PC-3 (cell line): ENCODE measurements at regions of chr12 and their contacts with region 1.

Region 1: GRCh38 chr12:87953256-87953860 is 75.8 kb downstream of the C12orf50 start:
- DNase-seq: peak; percentile 53
- ATAC-seq: peak; percentile 66; the same call in 1 of the 2 replicates
- H3K4me3 ChIP-seq: no peak overlapping the region
- H3K27ac ChIP-seq: no peak overlapping the region
- H3K4me1 ChIP-seq: no peaks in the 10 kb centered on the region
- H3K27me3 ChIP-seq: no peaks in the 10 kb centered on the region
- CTCF ChIP-seq: peak; percentile 81

Region 2: GRCh38 chr12:85951823-85952222 is 2001.5 kb before region 1 on chr12:
- CTCF ChIA-PET with region 1: no interaction called
- POLR2A ChIA-PET with region 1: no interaction called
- intact Hi-C with region 1: loop called (anchors 5 kb)
- DNase-seq: peak; percentile 49
- ATAC-seq: no peak
- H3K4me3 ChIP-seq: no peak overlapping the region
- H3K27ac ChIP-seq: no peak overlapping the region
- H3K4me1 ChIP-seq: no peaks in the 10 kb centered on the region
- H3K27me3 ChIP-seq: no peaks in the 10 kb centered on the region
- CTCF ChIP-seq: peak; percentile 69

Region 3: DNA sequence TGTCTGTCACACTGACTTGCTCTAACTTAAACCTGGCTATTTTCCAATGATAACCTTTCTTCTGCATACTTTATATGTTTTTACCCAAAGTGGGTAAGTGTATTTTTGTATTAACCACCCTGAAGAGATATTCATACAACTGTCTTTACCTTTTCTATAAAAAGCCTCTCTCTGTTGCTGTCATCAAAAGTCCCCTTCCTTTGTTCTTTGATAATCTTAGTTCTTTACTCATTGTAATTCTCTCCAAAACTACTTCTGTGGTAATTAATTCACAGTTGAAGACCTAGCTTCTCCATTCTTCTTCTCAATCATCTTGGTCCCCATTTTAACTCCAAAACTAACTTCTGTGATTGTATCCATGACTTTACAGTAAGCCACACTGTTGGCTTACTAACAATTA is 1217.5 kb before region 1 on chr12:
- CTCF ChIA-PET with region 1: no interaction called
- POLR2A ChIA-PET with region 1: no interaction called
- intact Hi-C with region 1: loop called (anchors 10 kb)
- DNase-seq: no peak
- ATAC-seq: no peak
- H3K4me3 ChIP-seq: no peak overlapping the region
- H3K27ac ChIP-seq: no peak overlapping the region
- H3K4me1 ChIP-seq: no peaks in the 10 kb centered on the region
- H3K27me3 ChIP-seq: no peaks in the 10 kb centered on the region
- CTCF ChIP-seq: no peak

Region 4: DNA sequence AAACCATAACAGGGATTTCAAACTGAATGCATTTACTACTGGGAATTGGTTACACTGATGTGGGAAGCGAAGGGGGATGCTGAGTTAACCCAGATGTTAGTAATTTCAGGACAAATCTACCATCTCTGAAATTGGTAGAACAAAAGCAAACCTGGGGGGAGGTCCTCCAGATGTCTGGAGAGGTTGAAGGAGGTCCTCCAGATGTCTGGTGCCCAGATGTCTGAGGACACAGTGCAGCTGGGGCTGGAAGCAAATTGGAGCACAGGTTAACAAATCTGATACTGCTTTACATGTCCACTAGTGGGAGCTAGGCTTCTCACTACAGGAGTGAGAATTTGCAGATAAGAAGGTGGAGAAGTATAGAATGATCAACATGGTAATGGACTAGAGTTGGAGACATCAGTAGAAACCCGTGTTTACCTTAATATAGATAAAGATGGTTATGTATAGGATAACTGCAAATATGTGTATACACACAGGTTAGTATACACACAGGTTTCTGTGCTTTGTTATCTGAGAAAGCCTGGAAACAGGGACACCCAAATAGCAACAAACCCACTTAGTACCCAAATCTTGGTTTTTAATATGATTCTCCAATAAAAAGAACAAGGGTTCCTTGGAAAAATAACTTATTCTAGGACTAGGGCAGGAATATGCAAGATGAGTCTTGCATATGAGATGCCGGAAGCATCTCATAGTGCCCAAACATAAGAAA is 86.6 kb before region 1 on chr12:
- CTCF ChIA-PET with region 1: no interaction called
- POLR2A ChIA-PET with region 1: no interaction called
- intact Hi-C with region 1: loop called (anchors 2 kb)
- DNase-seq: peak; percentile 55
- ATAC-seq: peak; percentile 66
- H3K4me3 ChIP-seq: no peak overlapping the region
- H3K27ac ChIP-seq: no peak overlapping the region
- H3K4me1 ChIP-seq: no peaks in the 10 kb centered on the region
- H3K27me3 ChIP-seq: no peaks in the 10 kb centered on the region
- CTCF ChIP-seq: peak; percentile 75

Region 5: DNA sequence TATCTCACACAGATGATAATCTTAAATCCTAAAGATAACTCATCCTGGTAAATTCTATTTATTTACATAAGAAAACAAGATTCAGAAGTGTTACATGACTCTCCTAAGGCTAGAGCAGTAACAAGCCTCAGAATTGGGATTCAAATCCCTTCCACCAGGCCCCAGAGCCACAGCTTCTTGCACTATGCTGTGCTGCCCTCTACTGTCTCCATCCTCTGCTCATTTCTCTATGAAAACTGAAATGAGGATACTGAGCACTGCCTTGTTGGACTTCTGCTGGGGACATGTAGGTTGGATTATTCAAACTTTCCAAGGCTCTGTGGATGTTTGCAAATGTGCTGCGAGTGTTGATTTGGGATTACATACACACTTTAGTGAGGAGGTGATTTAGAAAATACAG is 99.3 kb after region 1 on chr12:
- CTCF ChIA-PET with region 1: no interaction called
- POLR2A ChIA-PET with region 1: no interaction called
- intact Hi-C with region 1: loop called (anchors 10 kb)
- DNase-seq: peak; percentile 67
- ATAC-seq: peak; percentile 94
- H3K4me3 ChIP-seq: no peak overlapping the region
- H3K27ac ChIP-seq: no peak overlapping the region
- H3K4me1 ChIP-seq: no peaks in the 10 kb centered on the region
- H3K27me3 ChIP-seq: no peaks in the 10 kb centered on the region
- CTCF ChIP-seq: peak; percentile 79

Region 6: GRCh38 chr12:88218293-88218692 is 264.9 kb after region 1 on chr12:
- CTCF ChIA-PET with region 1: no interaction called
- POLR2A ChIA-PET with region 1: no interaction called
- intact Hi-C with region 1: no loop called
- DNase-seq: no peak
- ATAC-seq: no peak
- H3K4me3 ChIP-seq: no peak overlapping the region
- H3K27ac ChIP-seq: no peak overlapping the region
- H3K4me1 ChIP-seq: no peaks in the 10 kb centered on the region
- H3K27me3 ChIP-seq: no peaks in the 10 kb centered on the region
- CTCF ChIP-seq: no peak